Panc1 (cell line): ENCODE measurements at regions of chr17 and their contacts with region 1.

Region 1: DNA sequence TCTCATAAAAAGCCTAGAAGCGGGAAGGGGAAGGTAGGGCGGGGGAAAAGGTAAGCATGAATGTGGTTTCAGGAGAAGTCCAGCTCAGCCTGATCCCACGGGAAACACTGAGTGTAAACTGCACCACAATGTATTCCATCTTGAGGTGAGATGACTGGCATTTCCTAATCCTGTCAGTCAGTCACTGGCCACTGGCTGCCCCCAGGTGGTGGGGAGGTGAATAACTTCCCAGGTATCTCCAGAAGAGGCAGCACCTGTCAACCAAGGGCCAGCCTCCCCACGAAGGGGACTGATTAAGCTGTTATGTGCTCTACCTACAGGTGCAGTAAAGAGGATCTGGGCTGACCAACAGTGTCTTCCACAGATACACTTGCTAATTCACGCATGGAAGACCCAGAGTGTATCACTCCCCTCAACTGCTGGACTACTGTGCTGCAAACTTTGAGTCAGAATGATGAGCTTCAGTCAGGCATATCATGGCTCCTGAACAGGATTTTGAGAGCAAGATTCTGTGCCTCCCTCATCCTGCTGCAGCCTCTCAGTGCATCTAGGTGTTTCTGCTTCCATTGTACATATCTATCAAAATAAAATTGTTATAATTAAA is 108.5 kb upstream of the CCL2 start:
- DNase-seq: peak; percentile 24
- ATAC-seq: peak; percentile 91
- H3K4me3 ChIP-seq: no peak overlapping the region
- H3K27ac ChIP-seq: no peak overlapping the region
- H3K4me1 ChIP-seq: no peaks in the 10 kb centered on the region
- H3K27me3 ChIP-seq: no peaks in the 10 kb centered on the region
- CTCF ChIP-seq: peak; percentile 79

Region 2: DNA sequence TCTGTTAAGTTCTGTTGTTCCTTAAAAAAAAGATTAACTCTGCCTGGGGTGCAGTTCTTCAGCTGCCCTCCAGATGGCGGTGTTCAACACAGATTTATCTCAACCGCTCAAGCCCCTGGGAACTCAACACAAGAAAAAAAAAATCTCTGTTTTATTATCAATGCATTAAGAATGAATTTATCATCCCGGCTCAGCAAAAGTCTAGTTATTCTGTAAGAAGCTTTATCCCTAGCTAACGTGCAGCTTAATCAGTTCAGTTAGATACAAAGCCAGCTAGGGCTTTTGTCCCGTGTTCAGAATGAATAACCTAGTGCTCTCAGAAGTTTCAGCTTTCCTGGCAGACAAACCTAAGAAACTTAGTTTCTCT is 367.3 kb before region 1 on chr17:
- CTCF ChIA-PET with region 1: interaction called, 9 read pairs
- POLR2A ChIA-PET with region 1: no interaction called
- in situ Hi-C with region 1: no loop called
- intact Hi-C with region 1: loop called (anchors 1 kb)
- DNase-seq: peak; percentile 38
- ATAC-seq: peak; percentile 78
- H3K4me3 ChIP-seq: no peak overlapping the region
- H3K27ac ChIP-seq: no peak overlapping the region
- H3K4me1 ChIP-seq: no peaks in the 10 kb centered on the region
- H3K27me3 ChIP-seq: peaks cover 14% of the 10 kb centered on the region
- CTCF ChIP-seq: peak; percentile 90

Region 3: GRCh38 chr17:33927732-33928133 is 218.8 kb before region 1 on chr17:
- CTCF ChIA-PET with region 1: no interaction called
- POLR2A ChIA-PET with region 1: no interaction called
- in situ Hi-C with region 1: no loop called
- intact Hi-C with region 1: loop called (anchors 5 kb)
- DNase-seq: no peak
- ATAC-seq: no peak; the same call in 1 of the 2 replicates
- H3K4me3 ChIP-seq: no peak overlapping the region
- H3K27ac ChIP-seq: no peak overlapping the region
- H3K4me1 ChIP-seq: no peaks in the 10 kb centered on the region
- H3K27me3 ChIP-seq: peaks cover 4% of the 10 kb centered on the region; the same call in 1 of the 2 replicates
- CTCF ChIP-seq: no peak

Region 4: DNA sequence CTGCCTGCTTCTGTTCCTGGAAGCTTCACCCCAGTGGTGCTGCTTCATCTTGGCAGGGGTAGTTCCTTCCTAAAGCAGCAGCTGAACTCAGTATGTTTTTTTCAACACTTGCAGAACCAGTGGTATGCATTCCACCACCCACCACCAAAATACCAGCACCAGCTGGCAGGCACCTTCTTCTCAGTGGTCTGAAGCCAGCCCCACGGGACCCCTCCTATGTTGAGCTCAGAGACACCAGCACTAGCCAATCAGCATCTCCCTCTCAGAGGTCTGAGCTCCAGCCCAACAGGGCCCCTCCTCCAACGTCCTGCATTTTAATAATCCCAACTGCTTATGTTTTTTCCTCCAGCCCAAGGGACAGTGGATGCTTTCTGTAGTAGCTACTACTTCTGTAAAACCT is 191.1 kb before region 1 on chr17:
- CTCF ChIA-PET with region 1: no interaction called
- POLR2A ChIA-PET with region 1: no interaction called
- in situ Hi-C with region 1: no loop called
- intact Hi-C with region 1: no loop called
- DNase-seq: no peak
- ATAC-seq: no peak
- H3K4me3 ChIP-seq: no peak overlapping the region
- H3K27ac ChIP-seq: no peak overlapping the region
- H3K4me1 ChIP-seq: no peaks in the 10 kb centered on the region
- H3K27me3 ChIP-seq: no peaks in the 10 kb centered on the region
- CTCF ChIP-seq: no peak

Region 5: DNA sequence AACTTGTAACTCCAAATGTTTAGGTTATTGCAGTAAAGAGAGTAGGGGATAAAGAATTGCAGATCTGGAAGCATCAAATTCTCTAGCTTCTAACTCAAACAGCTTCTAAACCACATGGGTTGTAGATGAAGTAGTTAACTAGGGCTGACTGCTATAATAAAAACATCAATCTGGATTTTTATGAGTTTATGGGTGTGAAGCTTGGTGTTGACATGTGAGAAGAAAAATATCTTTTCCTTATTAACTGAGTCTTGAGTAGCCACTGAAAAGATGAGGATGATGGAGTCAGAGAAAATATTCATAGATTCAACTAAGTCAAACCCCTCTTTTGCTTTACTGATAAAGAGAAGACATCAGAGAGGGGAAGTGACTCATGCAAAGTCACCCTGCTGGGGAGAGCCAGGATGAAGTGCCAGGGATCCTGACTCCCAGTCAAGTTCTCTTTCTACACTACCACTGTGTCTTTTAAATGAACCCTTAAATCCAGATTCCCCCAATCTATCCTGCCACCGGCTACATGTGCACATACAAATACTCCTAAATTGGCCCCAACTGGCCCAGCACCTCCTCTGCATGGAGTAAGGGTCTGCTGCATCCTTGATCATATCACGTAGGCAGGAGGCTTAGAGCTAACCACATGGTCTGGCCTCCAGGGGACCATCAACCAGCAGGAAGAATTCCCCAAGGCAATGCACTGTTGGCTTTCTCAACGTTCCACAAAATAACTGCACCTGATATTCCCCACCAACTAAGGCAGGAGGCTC is 155.4 kb before region 1 on chr17:
- CTCF ChIA-PET with region 1: no interaction called
- POLR2A ChIA-PET with region 1: no interaction called
- in situ Hi-C with region 1: no loop called
- intact Hi-C with region 1: no loop called
- DNase-seq: no peak
- ATAC-seq: no peak
- H3K4me3 ChIP-seq: no peak overlapping the region
- H3K27ac ChIP-seq: no peak overlapping the region
- H3K4me1 ChIP-seq: no peaks in the 10 kb centered on the region
- H3K27me3 ChIP-seq: no peaks in the 10 kb centered on the region; the same call in 1 of the 2 replicates
- CTCF ChIP-seq: no peak

Region 6: DNA sequence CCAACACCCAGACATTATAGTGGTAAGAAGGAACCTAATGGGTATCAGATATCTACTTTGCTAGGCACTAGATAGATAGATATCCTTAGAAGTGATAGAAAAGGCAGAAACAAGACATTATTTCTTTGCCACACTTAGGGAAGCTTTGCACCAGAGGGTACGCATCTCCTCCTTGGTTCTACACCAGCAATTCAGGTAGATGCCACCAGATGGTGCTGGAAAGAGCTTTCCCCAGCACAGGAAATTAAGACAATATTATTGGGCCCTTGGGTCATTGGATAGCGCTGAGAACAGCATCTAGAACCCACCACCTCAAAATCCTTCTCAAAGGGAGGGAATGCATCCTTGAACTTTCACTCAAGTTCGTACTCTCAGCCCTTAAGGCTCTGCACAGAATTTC is 65.3 kb before region 1 on chr17:
- CTCF ChIA-PET with region 1: interaction called, 3 read pairs
- POLR2A ChIA-PET with region 1: no interaction called
- in situ Hi-C with region 1: no loop called
- intact Hi-C with region 1: loop called (anchors 2 kb)
- DNase-seq: no peak
- ATAC-seq: peak; percentile 58; the same call in 1 of the 2 replicates
- H3K4me3 ChIP-seq: no peak overlapping the region
- H3K27ac ChIP-seq: no peak overlapping the region
- H3K4me1 ChIP-seq: no peaks in the 10 kb centered on the region
- H3K27me3 ChIP-seq: no peaks in the 10 kb centered on the region; the same call in 1 of the 2 replicates
- CTCF ChIP-seq: peak; percentile 69

Region 7: GRCh38 chr17:34098699-34099098 is 47.8 kb before region 1 on chr17:
- CTCF ChIA-PET with region 1: no interaction called
- POLR2A ChIA-PET with region 1: no interaction called
- in situ Hi-C with region 1: no loop called
- intact Hi-C with region 1: no loop called
- DNase-seq: peak; percentile 24
- ATAC-seq: no peak
- H3K4me3 ChIP-seq: no peak overlapping the region
- H3K27ac ChIP-seq: no peak overlapping the region
- H3K4me1 ChIP-seq: no peaks in the 10 kb centered on the region
- H3K27me3 ChIP-seq: no peaks in the 10 kb centered on the region
- CTCF ChIP-seq: no peak

Region 8: GRCh38 chr17:34171245-34171818 is 24.8 kb after region 1 on chr17:
- CTCF ChIA-PET with region 1: no interaction called
- POLR2A ChIA-PET with region 1: no interaction called
- in situ Hi-C with region 1: no loop called
- intact Hi-C with region 1: no loop called
- DNase-seq: peak; percentile 48
- ATAC-seq: peak; percentile 91
- H3K4me3 ChIP-seq: no peak overlapping the region
- H3K27ac ChIP-seq: no peak overlapping the region
- H3K4me1 ChIP-seq: no peaks in the 10 kb centered on the region
- H3K27me3 ChIP-seq: no peaks in the 10 kb centered on the region
- CTCF ChIP-seq: peak; percentile 90